ENCODE measurements at regions of chr20 and their contacts with region 1.

Region 1: DNA sequence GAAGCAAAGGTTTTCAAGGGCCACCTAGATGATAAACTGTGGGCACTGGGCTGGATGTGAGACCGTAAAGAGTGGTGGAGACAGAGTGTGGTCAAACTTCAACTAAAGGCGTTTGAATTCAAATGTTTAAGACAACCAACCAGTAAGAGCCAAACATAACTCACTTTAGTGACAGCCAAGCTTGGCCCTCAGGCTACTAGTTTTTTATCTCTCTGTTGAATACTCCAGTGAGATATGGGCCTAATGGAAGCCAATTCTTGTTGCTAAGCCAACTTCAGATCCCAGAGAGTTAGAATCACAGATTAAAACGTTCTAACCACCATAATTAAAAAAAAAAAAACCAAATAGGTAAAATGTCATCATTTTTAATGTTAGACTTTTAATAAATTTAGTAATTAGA is 57.3 kb downstream of the TRMT6 start:
- DNase-seq: no peak
- ATAC-seq: no peak
- H3K4me3 ChIP-seq: no peak overlapping the region
- H3K27ac ChIP-seq: no peak overlapping the region
- H3K4me1 ChIP-seq: peaks cover 0 to 4% (median 0%) of the 10 kb centered on the region in 9 donors
- H3K27me3 ChIP-seq: peaks cover 0 to 6% (median 0%) of the 10 kb centered on the region in 7 donors
- CTCF ChIP-seq: no peak

Region 2: DNA sequence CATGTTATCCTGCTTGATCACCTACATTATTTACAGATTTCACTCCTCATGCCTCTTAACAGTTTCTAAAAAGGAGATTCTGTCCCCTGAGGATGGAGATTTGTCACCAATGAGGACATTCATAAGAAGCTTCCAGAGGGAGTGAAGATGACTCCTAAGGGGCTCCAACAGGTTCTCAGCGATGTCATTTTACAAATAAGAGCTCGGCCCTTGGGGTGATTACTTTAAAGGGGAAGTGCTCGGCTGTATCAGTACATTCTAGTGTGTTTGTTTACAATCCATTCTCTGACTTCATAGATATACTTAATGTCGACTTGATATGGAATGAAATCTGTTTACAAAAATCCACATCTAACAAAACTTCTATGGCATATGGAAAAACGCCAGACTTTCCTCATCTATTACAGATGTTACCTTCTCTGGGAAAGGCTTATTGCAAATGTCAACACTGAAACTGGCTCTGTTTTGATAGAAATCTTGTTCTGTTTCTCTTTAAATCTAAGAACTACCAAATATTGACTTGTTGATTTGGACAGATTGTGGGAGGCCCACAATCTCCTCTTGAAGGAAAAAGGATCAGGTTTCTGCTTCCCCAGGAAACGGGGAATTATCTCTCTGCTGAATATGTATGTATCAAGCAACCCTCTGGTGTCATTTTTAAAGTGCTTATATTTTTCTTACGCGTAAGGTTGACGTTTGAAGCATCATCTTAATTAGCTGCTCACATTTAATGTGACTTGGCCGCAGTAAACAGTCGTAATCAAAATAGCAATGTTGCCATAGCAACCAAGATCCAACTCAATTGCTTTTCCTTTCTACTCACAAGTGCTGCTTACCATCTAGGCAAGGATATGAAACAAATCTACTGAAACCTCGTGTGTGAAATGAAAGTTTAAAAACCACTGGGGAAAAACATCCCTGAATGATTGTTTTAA is 47.1 kb before region 1 on chr20:
- intact Hi-C with region 1: no loop called
- DNase-seq: no peak
- ATAC-seq: peak in 2 of 8 donors; percentile 31 to 42
- H3K4me3 ChIP-seq: peak overlapping the region in 5 of 10 donors; percentile 1 to 34 (median 11)
- H3K27ac ChIP-seq: peak overlapping the region in 1 of 10 donors; percentile 8
- H3K4me1 ChIP-seq: peaks cover 0 to 29% (median 23%) of the 10 kb centered on the region in 9 donors
- H3K27me3 ChIP-seq: no peaks in the 10 kb centered on the region
- CTCF ChIP-seq: no peak

Region 3: DNA sequence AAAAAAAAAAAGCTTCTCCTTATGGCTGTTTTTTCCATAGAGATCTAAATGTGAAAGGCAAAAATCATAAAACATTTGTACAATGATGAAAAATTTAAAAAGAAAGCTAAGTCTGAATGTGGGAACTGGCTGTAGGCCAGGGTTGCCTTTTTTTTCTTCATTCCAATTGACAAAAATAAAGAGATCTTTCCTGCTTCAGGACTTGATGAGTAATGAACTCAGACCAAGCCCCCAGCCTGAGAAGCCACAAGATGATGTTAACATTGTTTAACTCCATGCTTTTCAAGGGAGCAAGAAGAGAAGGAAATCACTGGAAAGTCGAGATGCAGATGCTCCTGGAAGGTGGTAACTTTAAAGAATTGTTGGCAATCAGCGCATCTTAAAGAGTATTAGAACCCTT is 15.9 kb after region 1 on chr20:
- intact Hi-C with region 1: loop called in 1 of 10 experiments (anchors 2 kb)
- DNase-seq: no peak
- ATAC-seq: no peak
- H3K4me3 ChIP-seq: no peak overlapping the region
- H3K27ac ChIP-seq: no peak overlapping the region
- H3K4me1 ChIP-seq: peaks cover 0 to 13% (median 6%) of the 10 kb centered on the region in 9 donors
- H3K27me3 ChIP-seq: peaks cover 0 to 57% (median 40%) of the 10 kb centered on the region in 7 donors
- CTCF ChIP-seq: no peak

Measured in heart right ventricle (tissue), 16 donors.